ENCODE measurements at regions of chr13 and their contacts with region 1.

Region 1: GRCh38 chr13:37316935-37317334 is 211.5 kb upstream of the CSNK1A1L start:
- DNase-seq: no peak
- H3K4me3 ChIP-seq: no peak overlapping the region
- H3K27ac ChIP-seq: no peak overlapping the region
- H3K4me1 ChIP-seq: no peaks in the 10 kb centered on the region
- H3K27me3 ChIP-seq: no peaks in the 10 kb centered on the region
- CTCF ChIP-seq: no peak
- POLR2A ChIP-seq: no peak

Region 2: DNA sequence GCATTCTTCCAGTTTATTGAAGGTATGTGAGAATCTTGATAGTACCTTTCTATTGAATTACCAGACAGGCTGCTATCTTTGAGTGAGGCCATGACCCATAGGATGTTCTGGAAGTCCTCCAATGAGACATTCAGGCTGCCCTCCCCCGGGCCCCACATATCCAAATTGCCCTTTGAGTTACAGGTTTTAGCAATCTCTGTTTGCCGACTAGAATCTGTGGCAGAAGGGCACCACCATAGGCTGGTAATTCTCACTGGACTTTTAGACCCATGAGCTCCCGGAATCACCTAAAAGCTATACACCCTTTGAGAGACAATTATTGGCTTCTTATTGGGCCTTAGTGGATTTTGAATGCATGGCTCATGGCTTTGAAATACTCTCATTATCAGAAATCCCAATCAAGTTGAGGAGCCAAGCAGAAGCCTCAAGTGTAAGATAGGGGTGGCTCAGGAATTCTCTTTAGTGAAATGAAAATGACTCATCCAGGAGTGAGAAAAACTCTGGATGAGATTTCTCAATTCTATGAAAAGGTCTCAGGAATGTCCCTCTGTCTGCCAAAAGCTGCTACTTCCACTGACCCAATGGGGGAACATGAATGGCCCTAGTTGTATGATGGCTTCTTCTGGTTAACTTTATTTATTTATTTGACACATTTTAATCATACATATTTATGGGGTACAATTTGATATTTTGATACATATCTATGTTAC is 39.3 kb before region 1 on chr13:
- intact Hi-C with region 1: loop called (anchors 1 kb)
- DNase-seq: no peak
- H3K4me3 ChIP-seq: no peak overlapping the region
- H3K27ac ChIP-seq: no peak overlapping the region
- H3K4me1 ChIP-seq: no peaks in the 10 kb centered on the region
- H3K27me3 ChIP-seq: no peaks in the 10 kb centered on the region
- CTCF ChIP-seq: no peak
- POLR2A ChIP-seq: no peak